Activated naive CD8-positive, alpha-beta T cell treated with anti-CD3 and anti-CD28 coated beads, Interleukin-2, amount 10 ng/mL, durations not matched to agents 7 days and 5 days (primary cell): ENCODE measurements at regions of chr11 and their contacts with region 1.

Region 1: DNA sequence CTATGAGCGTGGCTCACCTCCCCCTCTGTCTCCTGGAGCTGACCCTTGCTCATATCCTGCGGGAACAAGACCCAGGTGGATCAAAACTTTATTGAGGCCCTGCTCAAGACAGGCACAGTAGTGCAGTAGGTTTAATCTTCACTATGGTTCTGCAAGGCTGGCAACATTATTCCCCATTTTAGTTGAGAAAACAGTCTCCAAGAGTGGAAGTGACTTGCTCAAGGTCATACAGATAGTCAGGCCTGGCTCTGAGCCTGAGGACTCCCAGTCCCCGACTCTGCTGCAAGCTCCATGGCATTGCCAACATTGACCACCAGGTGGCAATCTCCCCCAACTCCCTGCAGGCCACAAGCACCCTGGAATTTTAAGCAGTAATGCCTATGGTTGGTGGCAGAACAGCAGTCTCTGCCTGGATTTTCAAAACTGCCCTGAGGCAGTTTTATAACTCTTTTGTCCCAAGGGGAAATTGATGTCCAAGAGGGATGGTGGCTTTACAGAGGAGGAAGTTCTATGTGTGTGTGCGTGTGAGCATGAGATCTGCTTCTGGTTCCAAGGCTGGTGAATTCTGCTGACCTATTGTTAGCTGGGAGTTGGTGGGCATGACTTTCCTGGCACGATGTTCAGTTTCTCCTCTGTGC is 34.1 kb downstream of the NEU3 start:
- DNase-seq: peak; percentile 77
- ATAC-seq: peak; percentile 91
- H3K4me3 Mint-ChIP-seq: no peak overlapping the region
- H3K27ac Mint-ChIP-seq: no peak overlapping the region
- H3K4me1 Mint-ChIP-seq: no peaks in the 10 kb centered on the region
- H3K27me3 Mint-ChIP-seq: no peaks in the 10 kb centered on the region

Region 2: DNA sequence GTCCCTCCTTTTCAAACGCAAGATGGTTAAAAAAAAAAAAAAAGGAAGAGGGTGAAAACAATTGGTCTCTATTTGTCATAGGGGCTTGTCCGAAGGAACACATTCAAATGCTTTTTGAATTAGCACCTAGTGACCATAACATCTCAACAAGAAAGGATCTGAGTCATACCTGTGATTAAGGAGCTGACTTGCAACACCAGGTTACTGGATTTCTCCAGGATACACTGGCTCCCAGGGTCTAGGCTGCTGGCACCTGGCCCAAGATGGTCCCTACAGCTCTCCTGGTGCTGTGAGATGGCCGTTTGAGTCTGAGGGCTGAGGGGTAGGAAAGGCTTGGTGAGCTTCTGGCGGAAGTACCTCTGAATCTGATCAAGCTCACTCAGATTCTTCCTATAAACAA is 985.6 kb before region 1 on chr11:
- POLR2A ChIA-PET with region 1: interaction called, 15 read pairs
- DNase-seq: no peak
- ATAC-seq: no peak
- H3K4me3 Mint-ChIP-seq: no peak overlapping the region
- H3K27ac Mint-ChIP-seq: no peak overlapping the region
- H3K4me1 Mint-ChIP-seq: peaks cover 12% of the 10 kb centered on the region
- H3K27me3 Mint-ChIP-seq: no peaks in the 10 kb centered on the region

Region 3: GRCh38 chr11:74909385-74909784 is 113.5 kb before region 1 on chr11:
- POLR2A ChIA-PET with region 1: no interaction called
- DNase-seq: no peak
- ATAC-seq: no peak
- H3K4me3 Mint-ChIP-seq: no peak overlapping the region
- H3K27ac Mint-ChIP-seq: no peak overlapping the region
- H3K4me1 Mint-ChIP-seq: peaks cover 9% of the 10 kb centered on the region
- H3K27me3 Mint-ChIP-seq: no peaks in the 10 kb centered on the region

Region 4: GRCh38 chr11:74929431-74930363 is 93.2 kb before region 1 on chr11:
- POLR2A ChIA-PET with region 1: no interaction called
- DNase-seq: no peak
- ATAC-seq: peak; percentile 49
- H3K4me3 Mint-ChIP-seq: no peak overlapping the region
- H3K27ac Mint-ChIP-seq: no peak overlapping the region
- H3K4me1 Mint-ChIP-seq: peaks cover 37% of the 10 kb centered on the region
- H3K27me3 Mint-ChIP-seq: no peaks in the 10 kb centered on the region